ENCODE measurements at regions of chr14 and their contacts with region 1.

Region 1: DNA sequence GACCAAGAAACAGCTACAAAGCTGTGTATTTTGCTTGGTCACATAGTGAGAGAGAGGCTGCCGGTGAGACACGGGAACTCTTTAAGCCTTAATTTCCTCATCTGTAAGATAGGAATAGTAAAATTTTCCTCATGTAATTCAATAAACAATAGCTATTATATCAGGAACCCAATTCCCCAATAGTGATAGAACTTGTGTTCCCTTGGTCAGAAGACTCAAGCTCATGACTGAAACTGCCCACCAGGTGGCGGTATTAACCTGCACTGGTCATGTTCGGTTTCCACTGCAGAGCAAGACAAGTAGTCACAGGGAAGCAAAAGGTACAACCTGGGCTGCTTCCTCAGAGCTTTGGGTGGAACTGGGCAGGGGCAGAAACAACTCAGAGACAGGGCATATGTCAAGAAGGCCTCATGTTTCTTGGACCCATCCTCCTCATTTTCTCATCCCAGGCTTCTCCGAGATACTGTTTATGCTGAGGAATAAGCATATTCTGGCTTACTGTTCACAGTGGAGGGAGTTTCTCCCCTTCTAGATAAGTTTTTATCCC is 4.2 kb upstream of the AJUBA start:
- DNase-seq: peak; percentile 77 to 93 (median 89)
- ATAC-seq: peak; percentile 69
- H3K4me3 ChIP-seq: no peak overlapping the region
- H3K4me3 Mint-ChIP-seq: no peak overlapping the region
- H3K27ac ChIP-seq: no peak overlapping the region
- H3K27ac Mint-ChIP-seq: no peak overlapping the region
- H3K4me1 ChIP-seq: peaks cover 7% of the 10 kb centered on the region
- H3K4me1 Mint-ChIP-seq: no peaks in the 10 kb centered on the region
- H3K27me3 ChIP-seq: peaks cover 0 to 6% of the 10 kb centered on the region in 2 experiments
- H3K27me3 Mint-ChIP-seq: no peaks in the 10 kb centered on the region
- CTCF ChIP-seq: peak; percentile 96

Region 2: GRCh38 chr14:21833836-21834235 is 1152.7 kb before region 1 on chr14:
- CTCF ChIA-PET with region 1: no interaction called
- POLR2A ChIA-PET with region 1: no interaction called
- intact Hi-C with region 1: no loop called
- DNase-seq: no peak
- ATAC-seq: peak; percentile 20
- H3K4me3 ChIP-seq: no peak overlapping the region
- H3K4me3 Mint-ChIP-seq: no peak overlapping the region
- H3K27ac ChIP-seq: no peak overlapping the region
- H3K27ac Mint-ChIP-seq: no peak overlapping the region
- H3K4me1 ChIP-seq: no peaks in the 10 kb centered on the region
- H3K4me1 Mint-ChIP-seq: peaks cover 2% of the 10 kb centered on the region
- H3K27me3 ChIP-seq: no peaks in the 10 kb centered on the region
- H3K27me3 Mint-ChIP-seq: peaks cover 23% of the 10 kb centered on the region
- CTCF ChIP-seq: no peak

Region 3: DNA sequence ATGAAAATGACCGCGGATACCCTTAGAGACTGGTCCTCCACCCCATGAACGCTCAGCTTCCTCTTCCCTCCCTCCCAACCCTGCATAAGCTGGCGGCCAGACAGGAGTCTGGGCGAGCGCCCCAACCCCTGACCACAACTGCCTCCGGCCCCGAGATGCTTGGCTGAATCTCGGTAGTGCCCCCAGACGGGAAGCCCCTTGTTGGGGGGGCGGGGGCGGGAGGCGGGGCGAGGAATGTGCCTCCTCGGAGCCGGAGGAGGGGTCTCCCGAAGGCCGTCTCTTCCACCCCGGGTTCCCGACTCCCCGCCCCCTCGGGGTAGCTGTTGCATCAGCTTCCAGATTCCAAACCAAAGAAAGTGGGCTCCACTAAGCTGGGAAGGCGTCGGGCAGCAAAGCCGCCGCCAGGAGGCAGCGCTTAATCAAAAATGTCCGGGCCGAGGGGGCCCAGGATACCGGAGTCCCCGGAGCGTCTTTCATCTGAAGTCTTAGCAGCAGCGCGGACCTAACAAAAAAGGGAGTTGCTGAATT is 163.9 kb before region 1 on chr14:
- CTCF ChIA-PET with region 1: interaction called, 11 read pairs
- POLR2A ChIA-PET with region 1: interaction called, 3 read pairs
- intact Hi-C with region 1: loop called (anchors 1 to 5 kb)
- DNase-seq: peak; percentile 41 to 85 (median 76)
- ATAC-seq: peak; percentile 89
- H3K4me3 ChIP-seq: peak overlapping the region; percentile 26 to 35
- H3K4me3 Mint-ChIP-seq: peak overlapping the region; percentile 61
- H3K27ac ChIP-seq: no peak overlapping the region
- H3K27ac Mint-ChIP-seq: no peak overlapping the region
- H3K4me1 ChIP-seq: peaks cover 10% of the 10 kb centered on the region
- H3K4me1 Mint-ChIP-seq: peaks cover 16% of the 10 kb centered on the region
- H3K27me3 ChIP-seq: peaks cover 4 to 21% of the 10 kb centered on the region in 2 experiments
- H3K27me3 Mint-ChIP-seq: peaks cover 23% of the 10 kb centered on the region
- CTCF ChIP-seq: peak; percentile 81

Region 4: DNA sequence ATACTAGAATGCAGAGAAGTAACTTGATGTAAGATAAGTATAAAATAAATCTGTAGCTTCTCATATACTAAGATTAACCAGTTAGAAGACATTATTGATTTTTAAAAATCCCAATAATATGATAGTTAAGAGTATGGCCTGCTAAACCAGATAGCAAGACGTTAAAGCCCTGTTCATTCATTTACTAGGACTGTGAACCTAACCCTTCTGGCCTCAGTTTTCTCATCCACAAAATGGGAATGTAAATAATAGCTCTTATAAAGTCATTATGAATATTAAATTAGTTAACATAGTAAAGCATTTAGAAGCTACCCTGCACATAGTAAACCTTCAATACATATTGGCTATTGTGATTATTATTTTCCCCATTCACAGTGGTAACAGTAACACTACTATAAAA is 51.4 kb before region 1 on chr14:
- CTCF ChIA-PET with region 1: interaction called, 18 read pairs
- POLR2A ChIA-PET with region 1: interaction called, 4 read pairs
- intact Hi-C with region 1: loop called (anchors 1 kb)
- DNase-seq: no peak
- ATAC-seq: no peak
- H3K4me3 ChIP-seq: no peak overlapping the region
- H3K4me3 Mint-ChIP-seq: no peak overlapping the region
- H3K27ac ChIP-seq: no peak overlapping the region
- H3K27ac Mint-ChIP-seq: no peak overlapping the region
- H3K4me1 ChIP-seq: no peaks in the 10 kb centered on the region
- H3K4me1 Mint-ChIP-seq: peaks cover 15% of the 10 kb centered on the region
- H3K27me3 ChIP-seq: no peaks in the 10 kb centered on the region
- H3K27me3 Mint-ChIP-seq: no peaks in the 10 kb centered on the region
- CTCF ChIP-seq: no peak

Region 5: DNA sequence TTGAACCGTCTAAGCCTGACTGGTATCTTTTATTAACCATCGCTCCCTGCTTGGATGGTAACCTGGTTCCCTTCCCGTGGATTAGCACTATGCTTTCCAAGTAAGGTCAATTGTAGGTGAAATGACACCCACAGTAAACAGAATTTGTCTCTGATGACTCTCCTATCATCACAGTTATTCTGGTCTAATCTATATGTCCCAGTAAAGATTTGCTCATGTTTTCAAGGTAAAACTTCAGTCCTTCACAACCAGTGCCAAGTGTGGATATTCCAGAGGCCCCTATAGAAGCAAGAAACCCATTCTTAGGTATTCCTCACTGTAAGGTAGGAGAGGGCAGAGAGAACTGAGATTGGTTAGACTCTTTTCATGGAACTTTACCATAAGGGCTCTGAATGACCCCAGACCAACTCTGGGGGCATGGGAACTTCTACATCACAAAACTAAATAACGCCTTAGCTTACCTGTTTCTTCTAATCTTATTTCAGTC is 19.8 kb before region 1 on chr14:
- CTCF ChIA-PET with region 1: interaction called, 207 read pairs
- POLR2A ChIA-PET with region 1: interaction called, 5 read pairs
- intact Hi-C with region 1: no loop called
- DNase-seq: no peak
- ATAC-seq: no peak
- H3K4me3 ChIP-seq: no peak overlapping the region
- H3K4me3 Mint-ChIP-seq: no peak overlapping the region
- H3K27ac ChIP-seq: no peak overlapping the region
- H3K27ac Mint-ChIP-seq: no peak overlapping the region
- H3K4me1 ChIP-seq: no peaks in the 10 kb centered on the region
- H3K4me1 Mint-ChIP-seq: no peaks in the 10 kb centered on the region
- H3K27me3 ChIP-seq: no peaks in the 10 kb centered on the region
- H3K27me3 Mint-ChIP-seq: peaks cover 4% of the 10 kb centered on the region
- CTCF ChIP-seq: no peak

Region 6: GRCh38 chr14:23013054-23013748 is 26.6 kb after region 1 on chr14:
- CTCF ChIA-PET with region 1: interaction called, 59 read pairs
- POLR2A ChIA-PET with region 1: no interaction called
- intact Hi-C with region 1: no loop called
- DNase-seq: no peak
- ATAC-seq: no peak
- H3K4me3 ChIP-seq: no peak overlapping the region
- H3K4me3 Mint-ChIP-seq: no peak overlapping the region
- H3K27ac ChIP-seq: no peak overlapping the region
- H3K27ac Mint-ChIP-seq: peak overlapping the region; percentile 64
- H3K4me1 ChIP-seq: peaks cover 13% of the 10 kb centered on the region
- H3K4me1 Mint-ChIP-seq: peaks cover 25% of the 10 kb centered on the region
- H3K27me3 ChIP-seq: no peaks in the 10 kb centered on the region
- H3K27me3 Mint-ChIP-seq: no peaks in the 10 kb centered on the region
- CTCF ChIP-seq: no peak

Region 7: GRCh38 chr14:23057757-23058653 is 71.4 kb after region 1 on chr14:
- CTCF ChIA-PET with region 1: interaction called, 1,218 read pairs
- POLR2A ChIA-PET with region 1: interaction called, 19 read pairs
- intact Hi-C with region 1: loop called (anchors 1 kb)
- DNase-seq: peak; percentile 70 to 92 (median 88)
- ATAC-seq: peak; percentile 70
- H3K4me3 ChIP-seq: peak overlapping the region; percentile 56 to 84
- H3K4me3 Mint-ChIP-seq: peak overlapping the region; percentile 87
- H3K27ac ChIP-seq: no peak overlapping the region
- H3K27ac Mint-ChIP-seq: peak overlapping the region; percentile 18
- H3K4me1 ChIP-seq: peaks cover 10% of the 10 kb centered on the region
- H3K4me1 Mint-ChIP-seq: peaks cover 17% of the 10 kb centered on the region
- H3K27me3 ChIP-seq: no peaks in the 10 kb centered on the region
- H3K27me3 Mint-ChIP-seq: no peaks in the 10 kb centered on the region
- CTCF ChIP-seq: peak; percentile 95